CD14-positive monocyte (primary cell): ENCODE measurements at regions of chr16 and their contacts with region 1.

Region 1: DNA sequence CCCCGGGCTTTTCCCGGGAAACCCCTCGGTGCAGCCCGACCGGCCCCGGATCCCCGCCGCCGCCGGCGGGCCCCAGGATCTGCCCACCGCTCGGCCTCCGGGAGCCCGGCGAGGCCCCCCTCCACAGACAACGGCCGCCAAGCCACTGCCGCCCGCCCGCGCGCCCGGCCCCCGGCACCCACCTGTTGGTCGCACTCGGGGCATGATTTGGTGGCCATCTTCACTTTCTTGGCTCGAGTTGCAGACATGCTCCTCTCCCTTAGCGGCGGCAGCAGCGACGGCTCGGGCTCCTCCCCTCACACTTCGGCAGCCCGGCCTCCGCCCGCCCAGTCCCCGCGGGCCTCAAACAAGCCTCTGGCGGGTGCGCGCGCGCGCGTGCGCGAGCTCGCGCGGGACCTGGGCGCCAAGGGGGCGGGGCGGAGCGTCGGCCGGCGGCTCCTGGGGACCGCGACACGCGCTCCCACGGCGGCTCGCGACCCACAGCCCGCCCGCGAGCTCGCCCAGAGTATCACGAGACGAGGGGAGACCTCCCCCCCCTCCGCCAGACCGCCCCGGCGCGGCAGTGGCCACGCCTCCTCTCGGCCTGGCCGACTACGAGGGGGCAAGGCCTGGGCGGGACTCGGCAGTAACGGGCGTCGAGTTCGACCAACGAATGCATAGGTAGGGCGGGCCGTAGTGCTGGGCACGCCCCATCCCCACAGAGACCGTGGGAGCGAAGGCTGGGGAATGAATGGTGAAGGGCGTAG is at the start of gene C16orf87:
- DNase-seq: peak; percentile 89 to 93 (median 91)
- H3K4me3 ChIP-seq: peak within 1 kb of the TSS; percentile 70 to 93 (median 82)
- H3K4me3 Mint-ChIP-seq: peak within 1 kb of the TSS; percentile 97 to 99
- H3K27ac ChIP-seq: peak within 1 kb of the TSS; percentile 34 to 82
- H3K27ac Mint-ChIP-seq: peak within 1 kb of the TSS; percentile 94 to 97 (median 94)
- H3K4me1 ChIP-seq: peaks cover 11 to 21% of the 10 kb centered on the region in 2 donors
- H3K4me1 Mint-ChIP-seq: peaks cover 27% of the 10 kb centered on the region
- H3K27me3 ChIP-seq: no peaks in the 10 kb centered on the region
- H3K27me3 Mint-ChIP-seq: no peaks in the 10 kb centered on the region
- CTCF ChIP-seq: no peak
- polyA plus RNA-seq, gene C16orf87: 6.1 to 9.7 (median 7.6) TPM

Region 2: GRCh38 chr16:46689365-46690280 is 141.5 kb before region 1 on chr16 and contains the start of gene ORC6:
- intact Hi-C with region 1: loop called in 1 of 2 experiments (anchors 1 kb)
- DNase-seq: peak; percentile 94 to 95 (median 94)
- H3K4me3 ChIP-seq: peak within 1 kb of the TSS; percentile 77 to 87 (median 85)
- H3K4me3 Mint-ChIP-seq: no peak within 1 kb of the TSS
- H3K27ac ChIP-seq: peak within 1 kb of the TSS; percentile 94 to 96
- H3K27ac Mint-ChIP-seq: no peak within 1 kb of the TSS
- H3K4me1 ChIP-seq: peaks cover 39 to 47% of the 10 kb centered on the region in 2 donors
- H3K4me1 Mint-ChIP-seq: peaks cover 34% of the 10 kb centered on the region
- H3K27me3 ChIP-seq: no peaks in the 10 kb centered on the region
- H3K27me3 Mint-ChIP-seq: no peaks in the 10 kb centered on the region
- CTCF ChIP-seq: peak; percentile 53
- polyA plus RNA-seq, gene ORC6: 0.21 to 1.5 (median 0.31) TPM

Region 3: GRCh38 chr16:46789499-46790414 is 41.3 kb before region 1 on chr16:
- intact Hi-C with region 1: loop called (anchors 5 kb)
- DNase-seq: peak; percentile 53 to 70 (median 66)
- H3K4me3 ChIP-seq: peak overlapping the region; percentile 57 to 86 (median 71)
- H3K4me3 Mint-ChIP-seq: peak overlapping the region; percentile 78 to 90
- H3K27ac ChIP-seq: peak overlapping the region; percentile 81 to 82
- H3K27ac Mint-ChIP-seq: peak overlapping the region; percentile 93 to 97 (median 95)
- H3K4me1 ChIP-seq: peaks cover 25 to 35% of the 10 kb centered on the region in 2 donors
- H3K4me1 Mint-ChIP-seq: peaks cover 37% of the 10 kb centered on the region
- H3K27me3 ChIP-seq: no peaks in the 10 kb centered on the region
- H3K27me3 Mint-ChIP-seq: peaks cover 0 to 1% (median 0%) of the 10 kb centered on the region in 3 donors
- CTCF ChIP-seq: no peak

Region 4: GRCh38 chr16:46883690-46884512 is 52.8 kb after region 1 on chr16 and contains the start of gene GPT2:
- intact Hi-C with region 1: no loop called
- DNase-seq: peak; percentile 82 to 85 (median 84)
- H3K4me3 ChIP-seq: peak within 1 kb of the TSS; percentile 56 to 87 (median 77)
- H3K4me3 Mint-ChIP-seq: peak within 1 kb of the TSS; percentile 86 to 89
- H3K27ac ChIP-seq: peak within 1 kb of the TSS; percentile 7 to 56
- H3K27ac Mint-ChIP-seq: peak within 1 kb of the TSS; percentile 67 to 88 (median 72)
- H3K4me1 ChIP-seq: peaks cover 19 to 33% of the 10 kb centered on the region in 2 donors
- H3K4me1 Mint-ChIP-seq: peaks cover 34% of the 10 kb centered on the region
- H3K27me3 ChIP-seq: no peaks in the 10 kb centered on the region
- H3K27me3 Mint-ChIP-seq: peaks cover 2 to 10% (median 9%) of the 10 kb centered on the region in 3 donors
- CTCF ChIP-seq: no peak
- polyA plus RNA-seq, gene GPT2: 0.98 to 1.5 (median 1.4) TPM

Region 5: GRCh38 chr16:47008174-47008573 is 177.1 kb after region 1 on chr16:
- intact Hi-C with region 1: no loop called
- DNase-seq: no peak
- H3K4me3 ChIP-seq: no peak overlapping the region
- H3K4me3 Mint-ChIP-seq: no peak overlapping the region
- H3K27ac ChIP-seq: no peak overlapping the region
- H3K27ac Mint-ChIP-seq: peak overlapping the region in 1 of 7 donors; percentile 16
- H3K4me1 ChIP-seq: no peaks in the 10 kb centered on the region
- H3K4me1 Mint-ChIP-seq: no peaks in the 10 kb centered on the region
- H3K27me3 ChIP-seq: no peaks in the 10 kb centered on the region
- H3K27me3 Mint-ChIP-seq: peaks cover 0 to 5% (median 2%) of the 10 kb centered on the region in 3 donors
- CTCF ChIP-seq: no peak

Region 6: DNA sequence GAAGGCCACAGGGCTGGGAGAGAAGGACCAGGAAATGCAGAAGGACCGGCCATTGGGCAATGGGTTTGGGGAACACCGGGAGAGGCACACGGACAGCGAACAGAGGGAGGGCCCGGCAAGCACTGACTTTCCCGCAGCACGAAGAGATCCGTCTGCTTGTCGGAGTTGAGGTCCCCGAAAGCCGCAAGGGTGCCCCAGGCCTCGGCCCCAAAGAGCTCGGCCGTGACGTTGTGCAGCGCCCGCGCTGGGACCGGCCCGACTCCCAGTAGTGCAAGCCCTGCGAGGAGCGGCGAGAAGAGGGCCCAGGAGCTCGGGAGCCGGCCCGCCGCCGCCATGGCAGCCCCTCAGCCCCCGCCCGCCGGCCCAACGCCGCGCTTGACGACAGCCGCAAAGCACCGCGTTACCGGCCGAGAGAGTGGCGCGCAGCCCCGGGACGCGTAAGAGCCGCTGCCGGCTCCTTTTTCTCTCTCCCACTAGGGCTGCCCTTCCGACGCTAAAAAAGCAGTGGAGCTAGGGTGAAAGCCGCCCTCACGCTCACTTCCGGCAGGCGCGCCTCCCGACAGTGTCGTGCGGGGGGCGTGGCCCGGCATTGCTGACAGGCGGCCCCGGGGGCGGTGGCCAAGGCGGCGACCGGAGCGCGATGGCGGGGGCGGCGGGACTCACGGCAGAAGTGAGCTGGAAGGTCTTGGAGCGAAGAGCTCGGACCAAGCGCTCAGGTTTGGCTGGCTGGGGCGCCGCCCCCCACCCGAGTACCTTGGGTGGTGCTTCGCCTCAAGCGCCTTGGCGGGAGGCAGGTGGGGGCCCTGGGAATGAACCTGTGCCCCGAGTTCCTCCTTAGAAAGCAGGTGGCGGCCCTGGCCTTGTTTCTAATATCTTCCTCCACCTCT is 629.9 kb after region 1 on chr16 and contains the starts of genes ITFG1 and PHKB:
- intact Hi-C with region 1: loop called in 1 of 2 experiments (anchors 5 kb)
- DNase-seq: peak; percentile 79 to 87 (median 82)
- H3K4me3 ChIP-seq: peak within 1 kb of the TSS; percentile 86 to 99 (median 90)
- H3K4me3 Mint-ChIP-seq: peak within 1 kb of the TSS; percentile 97 to 100
- H3K27ac ChIP-seq: peak within 1 kb of the TSS; percentile 96 to 98
- H3K27ac Mint-ChIP-seq: peak within 1 kb of the TSS; percentile 96 to 99 (median 97)
- H3K4me1 ChIP-seq: peaks cover 18 to 30% of the 10 kb centered on the region in 2 donors
- H3K4me1 Mint-ChIP-seq: peaks cover 52% of the 10 kb centered on the region
- H3K27me3 ChIP-seq: no peaks in the 10 kb centered on the region
- H3K27me3 Mint-ChIP-seq: peaks cover 0 to 1% (median 0%) of the 10 kb centered on the region in 3 donors
- CTCF ChIP-seq: no peak
- polyA plus RNA-seq, gene ITFG1: 28.9 to 62.5 (median 35.3) TPM
- polyA plus RNA-seq, gene PHKB: 49.8 to 53.1 (median 50.8) TPM